ENCODE measurements at regions of chr17 and their contacts with region 1.

Region 1: DNA sequence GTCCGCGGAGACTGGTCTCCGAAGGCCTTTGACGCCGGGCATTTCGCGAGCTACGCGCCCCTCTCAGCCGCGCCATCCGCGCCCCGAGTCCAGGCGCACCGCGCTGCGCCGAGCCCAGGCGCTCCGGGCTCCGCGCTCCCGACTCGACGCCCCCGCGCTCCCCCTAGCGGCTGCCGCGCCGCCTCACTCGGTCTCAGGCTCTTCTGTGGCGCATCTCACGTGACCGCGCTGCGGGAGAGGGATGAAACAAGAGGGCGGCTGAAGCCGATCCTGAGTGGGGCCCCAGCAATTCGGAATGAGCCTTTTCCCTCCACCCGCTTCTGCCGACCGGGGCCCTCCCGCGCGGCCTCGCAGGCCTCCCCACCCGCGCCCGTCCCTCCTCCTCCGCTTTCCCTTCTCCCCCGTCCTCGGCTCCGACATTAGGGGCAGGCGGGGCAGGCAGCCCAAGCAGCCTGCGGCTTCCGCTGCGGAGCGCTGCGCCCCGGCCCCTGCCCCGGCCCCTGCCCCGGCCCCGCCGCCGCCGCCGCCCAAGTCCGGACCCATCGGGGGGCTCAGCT is 42.5 kb upstream of the AMZ2 start:
- DNase-seq: peak; percentile 17
- H3K4me3 ChIP-seq: peak overlapping the region; percentile 87
- H3K27me3 ChIP-seq: peaks cover 7% of the 10 kb centered on the region
- CTCF ChIP-seq: peak; percentile 80

Region 2: GRCh38 chr17:68057531-68057952 is 147.8 kb before region 1 on chr17:
- CTCF ChIA-PET with region 1: interaction called, 14 read pairs
- POLR2A ChIA-PET with region 1: interaction called, 3 read pairs
- DNase-seq: no peak
- H3K4me3 ChIP-seq: no peak overlapping the region
- H3K27me3 ChIP-seq: no peaks in the 10 kb centered on the region
- CTCF ChIP-seq: peak; percentile 57

Region 3: DNA sequence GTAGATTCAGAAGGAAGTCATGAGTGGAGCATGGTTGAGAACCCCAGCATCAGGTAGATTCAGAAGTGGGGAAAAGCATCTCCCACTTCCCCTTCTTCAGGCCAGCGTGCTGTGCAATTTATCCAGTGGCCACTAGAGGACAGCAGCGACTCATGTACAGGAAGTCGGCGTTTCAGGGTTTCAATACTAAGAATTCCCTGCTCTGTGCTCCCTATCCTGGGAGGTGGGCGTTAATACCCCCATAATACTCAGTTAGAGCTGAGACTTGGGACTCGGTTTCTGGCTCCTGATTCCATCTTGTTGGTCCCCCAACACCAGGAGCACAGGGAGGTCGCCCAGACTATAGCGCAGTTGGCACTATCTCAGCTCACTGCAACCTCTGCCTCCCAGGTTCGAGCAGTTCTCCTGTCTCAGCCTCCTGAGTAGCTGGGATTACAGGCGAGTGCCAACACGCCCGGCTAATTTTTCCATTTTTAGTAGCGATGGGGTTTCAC is 32.8 kb before region 1 on chr17:
- CTCF ChIA-PET with region 1: interaction called, 26 read pairs
- POLR2A ChIA-PET with region 1: no interaction called
- DNase-seq: no peak
- H3K4me3 ChIP-seq: no peak overlapping the region
- H3K27me3 ChIP-seq: no peaks in the 10 kb centered on the region
- CTCF ChIP-seq: peak; percentile 94

Region 4: GRCh38 chr17:68184816-68185436 is 20.4 kb before region 1 on chr17:
- CTCF ChIA-PET with region 1: interaction called, 20 read pairs
- POLR2A ChIA-PET with region 1: no interaction called
- DNase-seq: no peak
- H3K4me3 ChIP-seq: no peak overlapping the region
- H3K27me3 ChIP-seq: no peaks in the 10 kb centered on the region
- CTCF ChIP-seq: no peak

Region 5: GRCh38 chr17:68334401-68334800 is 129.1 kb after region 1 on chr17:
- CTCF ChIA-PET with region 1: no interaction called
- POLR2A ChIA-PET with region 1: no interaction called
- DNase-seq: no peak
- H3K4me3 ChIP-seq: no peak overlapping the region
- H3K27me3 ChIP-seq: no peaks in the 10 kb centered on the region
- CTCF ChIP-seq: no peak

Region 6: DNA sequence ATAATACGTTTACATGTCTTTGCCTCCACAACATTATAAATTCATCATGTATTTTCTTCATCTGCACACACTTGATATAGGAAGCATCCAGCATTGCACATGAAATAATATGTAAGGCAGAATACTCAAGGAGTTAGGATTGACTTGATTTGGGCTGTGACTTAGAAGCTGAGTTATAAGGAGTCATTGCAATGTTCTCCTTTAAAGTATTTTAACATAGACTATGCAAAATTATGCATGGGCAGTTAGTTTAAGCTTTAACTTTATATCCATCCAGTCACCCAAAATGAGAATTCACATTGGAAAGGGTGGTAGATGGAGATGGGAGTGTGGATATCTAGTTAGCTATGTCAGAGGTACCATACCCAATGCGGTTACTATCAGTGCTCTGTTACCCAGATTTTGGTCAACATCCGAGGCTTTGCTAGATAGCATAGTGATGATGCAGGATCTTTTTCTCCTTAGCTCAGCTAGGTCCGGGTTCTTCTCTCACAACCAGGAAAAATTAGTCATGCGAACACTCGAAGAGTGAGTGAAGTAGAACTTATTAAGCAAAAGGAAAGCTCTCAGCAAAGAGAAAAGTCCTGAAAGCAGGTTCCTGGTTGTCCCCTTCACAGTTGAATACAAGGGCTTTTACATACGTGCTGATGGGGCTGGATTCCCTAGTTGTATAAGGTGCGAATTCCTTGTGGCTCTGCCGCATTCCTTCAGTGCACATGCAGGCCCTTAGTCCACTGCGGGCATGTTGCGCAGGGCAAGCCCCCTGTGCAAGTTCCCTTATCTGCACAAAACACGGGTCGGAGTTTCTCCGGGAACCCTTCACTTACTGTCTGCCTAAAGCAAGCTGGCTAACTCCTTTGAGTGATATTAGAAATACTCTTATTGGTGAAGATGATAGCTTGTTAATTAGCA is 469.0 kb after region 1 on chr17:
- CTCF ChIA-PET with region 1: no interaction called
- POLR2A ChIA-PET with region 1: no interaction called
- DNase-seq: no peak
- H3K4me3 ChIP-seq: no peak overlapping the region
- H3K27me3 ChIP-seq: peaks cover 2% of the 10 kb centered on the region; the same call in 1 of the 2 replicates
- CTCF ChIP-seq: no peak